AG04450 (cell line): ENCODE measurements at regions of chr6 and their contacts with region 1.

Region 1: DNA sequence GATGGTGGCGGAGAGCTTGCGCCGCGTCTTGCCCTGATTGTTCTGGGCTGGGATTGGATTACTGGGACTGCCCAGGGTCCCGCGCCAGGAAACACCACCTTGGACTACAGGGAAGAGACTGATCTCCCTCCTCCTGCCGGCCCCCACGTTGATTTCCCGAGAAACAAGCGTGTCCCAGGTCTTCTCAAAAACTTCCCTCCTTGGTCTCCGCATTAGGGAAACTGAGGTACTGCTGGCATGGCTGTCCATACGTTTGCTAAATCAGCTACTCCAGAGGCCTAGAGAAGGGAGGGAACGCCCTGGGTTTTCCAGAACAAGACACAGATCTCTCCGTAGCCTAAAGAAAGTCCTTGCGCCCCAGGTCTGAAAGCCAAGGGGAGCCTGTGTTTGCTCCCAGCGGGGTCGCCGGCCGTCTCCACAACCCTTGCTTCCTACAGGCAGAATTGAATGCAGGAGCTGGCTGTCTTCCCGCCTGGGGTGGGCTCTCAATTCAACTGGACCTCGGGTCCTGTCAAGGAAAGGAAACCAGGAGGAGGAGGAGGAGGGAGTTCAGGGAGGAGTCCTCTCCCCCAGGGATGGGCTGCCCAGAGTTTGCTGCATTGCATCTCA is 29.2 kb downstream of the TFAP2A start:
- DNase-seq: no peak
- H3K4me3 ChIP-seq: no peak overlapping the region
- H3K27ac ChIP-seq: no peak overlapping the region
- H3K27me3 ChIP-seq: peaks cover 95% of the 10 kb centered on the region
- CTCF ChIP-seq: no peak

Region 2: GRCh38 chr6:10099529-10100140 is 286.0 kb before region 1 on chr6:
- CTCF ChIA-PET with region 1: no interaction called
- POLR2A ChIA-PET with region 1: no interaction called
- DNase-seq: no peak
- H3K4me3 ChIP-seq: no peak overlapping the region
- H3K27ac ChIP-seq: no peak overlapping the region
- H3K27me3 ChIP-seq: no peaks in the 10 kb centered on the region
- CTCF ChIP-seq: no peak

Region 3: GRCh38 chr6:10412746-10413261 is 27.2 kb after region 1 on chr6:
- CTCF ChIA-PET with region 1: no interaction called
- POLR2A ChIA-PET with region 1: interaction called, 10 read pairs
- DNase-seq: no peak
- H3K4me3 ChIP-seq: peak overlapping the region; percentile 63
- H3K27ac ChIP-seq: no peak overlapping the region
- H3K27me3 ChIP-seq: peaks cover 84% of the 10 kb centered on the region
- CTCF ChIP-seq: no peak